Activated CD4-positive, alpha-beta T cell treated with anti-CD3 and anti-CD28 coated beads for 36 hours (primary cell): ENCODE measurements at regions of chr19 and their contacts with region 1.

Region 1: DNA sequence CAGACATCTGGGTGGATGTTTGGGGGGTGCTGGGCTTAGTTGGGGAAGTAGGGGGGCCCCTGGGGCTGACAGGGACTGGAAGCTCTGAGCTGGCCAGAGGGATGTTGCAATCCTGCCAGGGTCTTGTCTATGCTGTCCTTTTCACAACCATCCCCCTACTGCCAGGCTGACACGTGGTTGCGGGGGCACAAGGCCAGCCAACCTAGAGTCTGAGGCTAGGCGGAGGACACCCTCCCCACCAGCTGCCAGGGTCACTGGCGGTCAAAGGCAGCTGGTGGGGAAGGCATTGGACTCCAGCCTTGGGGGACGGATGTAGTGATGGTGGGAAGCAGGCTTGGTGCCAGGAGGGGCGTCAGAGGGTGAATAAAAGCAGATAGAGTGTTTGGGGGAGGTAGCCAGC is 1.6 kb upstream of the APOC1 start:
- DNase-seq: no peak
- ATAC-seq: no peak
- H3K4me3 Mint-ChIP-seq: no peak overlapping the region
- H3K27ac Mint-ChIP-seq: no peak overlapping the region
- H3K4me1 Mint-ChIP-seq: peaks cover 8% of the 10 kb centered on the region
- H3K27me3 Mint-ChIP-seq: peaks cover 27% of the 10 kb centered on the region

Region 2: GRCh38 chr19:44746946-44747738 is 165.7 kb before region 1 on chr19:
- CTCF ChIA-PET with region 1: no interaction called
- POLR2A ChIA-PET with region 1: no interaction called
- intact Hi-C with region 1: loop called in 1 of 2 experiments (anchors 1 kb)
- DNase-seq: peak; percentile 98
- ATAC-seq: peak; percentile 85
- H3K4me3 Mint-ChIP-seq: peak overlapping the region; percentile 91
- H3K27ac Mint-ChIP-seq: peak overlapping the region; percentile 95
- H3K4me1 Mint-ChIP-seq: peaks cover 43% of the 10 kb centered on the region
- H3K27me3 Mint-ChIP-seq: no peaks in the 10 kb centered on the region

Region 3: DNA sequence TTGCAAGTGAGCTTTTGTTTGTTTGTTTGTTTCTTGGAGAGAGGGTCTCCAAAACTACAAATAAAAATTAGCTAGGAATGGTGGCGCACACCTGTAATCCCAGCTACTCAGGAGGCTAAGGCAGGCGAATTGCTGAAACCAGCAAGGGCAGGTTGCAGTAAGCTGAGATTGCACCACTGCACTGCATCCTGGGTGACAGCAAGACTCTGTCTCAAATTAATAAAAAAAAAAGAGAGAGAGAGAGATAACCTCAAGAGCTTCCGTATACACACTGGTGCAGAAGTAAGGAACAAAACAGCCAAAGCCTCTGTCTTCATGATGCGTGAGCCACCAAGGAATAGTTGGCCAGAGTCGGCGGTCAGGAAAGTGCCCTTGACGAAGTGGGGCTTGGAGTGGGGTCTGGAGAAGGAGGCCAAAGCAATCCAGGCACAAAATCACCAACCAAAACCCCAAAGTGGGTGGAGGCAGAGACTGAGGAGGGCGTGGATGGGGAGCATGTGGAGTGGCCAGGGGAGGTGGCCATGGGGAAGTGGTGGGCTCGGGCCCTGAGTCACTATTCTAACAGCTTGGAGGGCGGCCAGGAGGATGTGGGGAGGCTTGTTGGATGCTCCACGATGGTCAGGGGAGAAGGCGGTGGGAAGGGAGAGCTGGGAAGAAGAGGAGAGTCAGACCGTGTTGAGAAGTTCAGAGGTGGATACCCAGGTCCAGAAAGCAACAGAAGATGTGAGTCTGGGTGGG is 43.0 kb before region 1 on chr19:
- CTCF ChIA-PET with region 1: no interaction called
- POLR2A ChIA-PET with region 1: no interaction called
- intact Hi-C with region 1: no loop called
- DNase-seq: no peak
- ATAC-seq: no peak
- H3K4me3 Mint-ChIP-seq: no peak overlapping the region
- H3K27ac Mint-ChIP-seq: no peak overlapping the region
- H3K4me1 Mint-ChIP-seq: no peaks in the 10 kb centered on the region
- H3K27me3 Mint-ChIP-seq: no peaks in the 10 kb centered on the region

Region 4: GRCh38 chr19:45370410-45371204 is 457.8 kb after region 1 on chr19 and contains the start of gene ERCC2:
- CTCF ChIA-PET with region 1: no interaction called
- POLR2A ChIA-PET with region 1: no interaction called
- intact Hi-C with region 1: loop called in 1 of 2 experiments (anchors 1 kb)
- DNase-seq: peak; percentile 100
- ATAC-seq: peak; percentile 100
- H3K4me3 Mint-ChIP-seq: peak within 1 kb of the TSS; percentile 79
- H3K27ac Mint-ChIP-seq: peak within 1 kb of the TSS; percentile 97
- H3K4me1 Mint-ChIP-seq: peaks cover 8% of the 10 kb centered on the region
- H3K27me3 Mint-ChIP-seq: no peaks in the 10 kb centered on the region
- total RNA-seq, gene ERCC2: 27.5 to 30.4 TPM